ENCODE measurements at regions of chr6 and their contacts with region 1.

Region 1: GRCh38 chr6:122520179-122520578 is 48.6 kb upstream of the SERINC1 start:
- DNase-seq: no peak
- H3K4me3 ChIP-seq: no peak overlapping the region
- H3K27ac ChIP-seq: no peak overlapping the region
- H3K4me1 ChIP-seq: no peaks in the 10 kb centered on the region
- H3K27me3 ChIP-seq: no peaks in the 10 kb centered on the region
- CTCF ChIP-seq: no peak
- EP300 ChIP-seq: no peak
- POLR2A ChIP-seq: no peak

Region 2: DNA sequence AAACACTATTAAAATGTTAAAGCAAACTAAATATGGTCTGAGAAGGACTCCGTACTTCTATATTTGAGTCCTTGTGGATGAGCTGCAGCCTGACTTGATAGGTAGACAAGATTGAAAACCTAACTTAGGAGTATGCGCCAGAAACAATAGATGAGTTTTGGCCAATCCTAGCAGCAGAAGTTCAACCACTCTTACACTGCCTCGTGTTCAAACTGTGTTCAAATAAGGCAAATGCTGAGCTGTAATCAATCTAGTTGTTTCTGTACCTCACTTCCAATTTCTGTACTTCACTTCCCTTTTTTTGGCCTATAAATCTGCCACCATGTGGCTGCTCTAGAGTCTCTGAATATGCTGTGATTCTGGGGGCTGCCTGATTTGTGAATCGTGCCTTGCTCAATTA is 35.4 kb before region 1 on chr6:
- in situ Hi-C with region 1: no loop called
- intact Hi-C with region 1: loop called (anchors 1 kb)
- DNase-seq: no peak
- H3K4me3 ChIP-seq: no peak overlapping the region
- H3K27ac ChIP-seq: no peak overlapping the region
- H3K4me1 ChIP-seq: no peaks in the 10 kb centered on the region
- H3K27me3 ChIP-seq: no peaks in the 10 kb centered on the region
- CTCF ChIP-seq: no peak
- EP300 ChIP-seq: no peak
- POLR2A ChIP-seq: no peak

Measured in transverse colon (tissue), 4 donors.